ENCODE measurements at regions of chr16 and their contacts with region 1.

Region 1: DNA sequence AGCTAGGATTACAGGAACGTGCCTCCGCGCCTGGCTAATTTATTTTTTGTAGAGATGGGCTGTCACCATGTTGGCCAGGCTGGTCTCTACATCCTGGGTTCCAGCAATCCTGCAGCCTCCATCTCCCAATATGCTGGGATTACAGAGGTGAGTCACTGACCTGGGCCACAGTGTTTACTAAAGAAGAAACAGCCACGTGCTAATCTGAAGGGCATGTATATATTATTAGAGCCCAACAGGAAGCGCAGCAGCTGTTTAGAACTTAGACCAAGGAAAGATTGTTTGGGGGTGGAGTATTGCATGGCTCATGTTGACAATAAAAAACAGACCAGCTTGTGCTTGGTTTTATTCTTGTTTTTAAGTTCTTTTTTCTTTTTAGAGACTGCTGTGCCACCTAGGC is 60.2 kb downstream of the HAPSTR1 start:
- DNase-seq: no peak
- ATAC-seq: no peak
- H3K4me3 ChIP-seq: no peak overlapping the region
- H3K27ac ChIP-seq: no peak overlapping the region
- H3K4me1 ChIP-seq: no peaks in the 10 kb centered on the region
- H3K27me3 ChIP-seq: no peaks in the 10 kb centered on the region
- CTCF ChIP-seq: no peak

Region 2: GRCh38 chr16:9138716-9139501 is 12.7 kb before region 1 on chr16:
- CTCF ChIA-PET with region 1: interaction called, 15 read pairs
- POLR2A ChIA-PET with region 1: no interaction called
- intact Hi-C with region 1: no loop called
- DNase-seq: peak; percentile 50
- ATAC-seq: peak; percentile 79
- H3K4me3 ChIP-seq: no peak overlapping the region; the same call in 1 of the 2 replicates
- H3K27ac ChIP-seq: no peak overlapping the region
- H3K4me1 ChIP-seq: 0 out of 2 replicates have a peak, but pooled peaks cover 4% of the 10 kb centered on the region
- H3K27me3 ChIP-seq: no peaks in the 10 kb centered on the region
- CTCF ChIP-seq: peak; percentile 86

Measured in PC-3 (cell line).